SK-N-SH (cell line): ENCODE measurements at regions of chr1 and their contacts with region 1.

Region 1: GRCh38 chr1:154878371-154879022 is 8.4 kb upstream of the KCNN3 start:
- DNase-seq: peak; percentile 87
- H3K4me3 ChIP-seq: peak overlapping the region in 1 of 2 experiments; percentile 38; a peak in 1 of 4 replicates
- H3K27ac ChIP-seq: no peak overlapping the region
- H3K4me1 ChIP-seq: peaks cover 0 to 3% of the 10 kb centered on the region in 2 experiments; a peak in 1 of 4 replicates
- H3K27me3 ChIP-seq: no peaks in the 10 kb centered on the region; the same call in 1 of the 2 replicates
- CTCF ChIP-seq: peak; percentile 88
- EP300 ChIP-seq: no peak
- RAD21 ChIP-seq: peak; percentile 96

Region 2: GRCh38 chr1:154558575-154559465 is 319.7 kb before region 1 on chr1 and contains the start of gene UBE2Q1:
- CTCF ChIA-PET with region 1: interaction called, 28 read pairs
- POLR2A ChIA-PET with region 1: interaction called, 6 read pairs
- DNase-seq: peak; percentile 98
- H3K4me3 ChIP-seq: peak within 1 kb of the TSS; percentile 87 to 94
- H3K27ac ChIP-seq: peak within 1 kb of the TSS; percentile 75 to 96
- H3K4me1 ChIP-seq: peaks cover 7 to 32% of the 10 kb centered on the region in 2 experiments; a peak in 2 of 4 replicates
- H3K27me3 ChIP-seq: no peaks in the 10 kb centered on the region
- CTCF ChIP-seq: no peak
- EP300 ChIP-seq: peak; percentile 36 to 51; a peak in 2 of 4 replicates
- RAD21 ChIP-seq: no peak
- polyA plus RNA-seq, gene UBE2Q1: 12.5 and 15.2 TPM in 2 replicates

Region 3: GRCh38 chr1:154669464-154670282 is 208.8 kb before region 1 on chr1:
- CTCF ChIA-PET with region 1: interaction called, 74 read pairs
- POLR2A ChIA-PET with region 1: interaction called, 4 read pairs
- DNase-seq: peak; percentile 89
- H3K4me3 ChIP-seq: no peak overlapping the region
- H3K27ac ChIP-seq: no peak overlapping the region
- H3K4me1 ChIP-seq: no peaks in the 10 kb centered on the region
- H3K27me3 ChIP-seq: no peaks in the 10 kb centered on the region; the same call in 1 of the 2 replicates
- CTCF ChIP-seq: peak; percentile 80
- EP300 ChIP-seq: no peak
- RAD21 ChIP-seq: peak; percentile 98

Region 4: DNA sequence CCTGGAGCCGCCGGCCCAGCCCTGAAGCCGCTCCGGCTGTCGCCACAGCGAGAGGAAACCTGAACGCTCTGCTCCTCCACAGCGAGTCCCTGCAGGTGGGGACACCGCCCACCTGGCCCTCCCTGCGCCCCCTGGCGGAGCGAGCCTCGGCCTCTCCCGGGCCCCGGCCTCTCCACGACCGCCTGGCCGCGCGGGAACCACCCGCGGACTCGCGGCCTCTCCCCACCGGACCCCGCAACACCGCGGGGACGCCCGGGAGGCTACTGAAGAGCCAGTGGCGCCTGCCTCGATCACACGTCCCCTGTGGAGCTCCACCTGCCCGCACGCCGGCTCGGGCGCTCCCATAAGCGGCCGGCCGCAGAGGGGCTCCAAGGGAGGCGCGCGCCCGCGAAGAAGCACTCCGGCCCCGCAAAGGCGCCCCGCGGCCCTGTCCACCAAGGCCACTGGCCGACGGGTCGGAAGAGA is 118.0 kb before region 1 on chr1:
- CTCF ChIA-PET with region 1: interaction called, 23 read pairs
- POLR2A ChIA-PET with region 1: no interaction called
- DNase-seq: peak; percentile 91
- H3K4me3 ChIP-seq: peak overlapping the region; percentile 35 to 56
- H3K27ac ChIP-seq: no peak overlapping the region
- H3K4me1 ChIP-seq: no peaks in the 10 kb centered on the region; a peak in 1 of 4 replicates
- H3K27me3 ChIP-seq: peaks cover 26% of the 10 kb centered on the region
- CTCF ChIP-seq: peak; percentile 66
- EP300 ChIP-seq: no peak
- RAD21 ChIP-seq: peak; percentile 60

Region 5: GRCh38 chr1:154833841-154834240 is 44.7 kb before region 1 on chr1:
- CTCF ChIA-PET with region 1: interaction called, 12 read pairs
- POLR2A ChIA-PET with region 1: no interaction called
- DNase-seq: no peak
- H3K4me3 ChIP-seq: no peak overlapping the region
- H3K27ac ChIP-seq: no peak overlapping the region
- H3K4me1 ChIP-seq: peaks cover 0 to 43% of the 10 kb centered on the region in 2 experiments; a peak in 1 of 4 replicates
- H3K27me3 ChIP-seq: no peaks in the 10 kb centered on the region; the same call in 1 of the 2 replicates
- CTCF ChIP-seq: no peak
- EP300 ChIP-seq: no peak
- RAD21 ChIP-seq: no peak

Region 6: GRCh38 chr1:154936555-154937084 is 58.1 kb after region 1 on chr1 and contains the start of gene PMVK:
- CTCF ChIA-PET with region 1: interaction called, 10 read pairs
- POLR2A ChIA-PET with region 1: interaction called, 3 read pairs
- DNase-seq: peak; percentile 97
- H3K4me3 ChIP-seq: peak within 1 kb of the TSS; percentile 63 to 77
- H3K27ac ChIP-seq: peak within 1 kb of the TSS; percentile 94 to 95
- H3K4me1 ChIP-seq: peaks cover 20 to 28% of the 10 kb centered on the region in 2 experiments; a peak in 3 of 4 replicates
- H3K27me3 ChIP-seq: no peaks in the 10 kb centered on the region
- CTCF ChIP-seq: peak; percentile 46
- EP300 ChIP-seq: peak in 1 of 2 experiments; percentile 55; a peak in 1 of 4 replicates
- RAD21 ChIP-seq: no peak
- polyA plus RNA-seq, gene PMVK: 50.7 and 59.6 TPM in 2 replicates

Region 7: GRCh38 chr1:154992721-154993571 is 114.4 kb after region 1 on chr1:
- CTCF ChIA-PET with region 1: no interaction called
- POLR2A ChIA-PET with region 1: no interaction called
- DNase-seq: no peak
- H3K4me3 ChIP-seq: no peak overlapping the region
- H3K27ac ChIP-seq: peak overlapping the region; percentile 14 to 43; a peak in 2 of 4 replicates
- H3K4me1 ChIP-seq: peaks cover 3 to 29% of the 10 kb centered on the region in 2 experiments; a peak in 3 of 4 replicates
- H3K27me3 ChIP-seq: no peaks in the 10 kb centered on the region
- CTCF ChIP-seq: peak; percentile 30
- EP300 ChIP-seq: no peak
- RAD21 ChIP-seq: peak; percentile 31